Tibial artery (tissue), 4 donors: ENCODE measurements at regions of chr3 and their contacts with region 1.

Region 1: DNA sequence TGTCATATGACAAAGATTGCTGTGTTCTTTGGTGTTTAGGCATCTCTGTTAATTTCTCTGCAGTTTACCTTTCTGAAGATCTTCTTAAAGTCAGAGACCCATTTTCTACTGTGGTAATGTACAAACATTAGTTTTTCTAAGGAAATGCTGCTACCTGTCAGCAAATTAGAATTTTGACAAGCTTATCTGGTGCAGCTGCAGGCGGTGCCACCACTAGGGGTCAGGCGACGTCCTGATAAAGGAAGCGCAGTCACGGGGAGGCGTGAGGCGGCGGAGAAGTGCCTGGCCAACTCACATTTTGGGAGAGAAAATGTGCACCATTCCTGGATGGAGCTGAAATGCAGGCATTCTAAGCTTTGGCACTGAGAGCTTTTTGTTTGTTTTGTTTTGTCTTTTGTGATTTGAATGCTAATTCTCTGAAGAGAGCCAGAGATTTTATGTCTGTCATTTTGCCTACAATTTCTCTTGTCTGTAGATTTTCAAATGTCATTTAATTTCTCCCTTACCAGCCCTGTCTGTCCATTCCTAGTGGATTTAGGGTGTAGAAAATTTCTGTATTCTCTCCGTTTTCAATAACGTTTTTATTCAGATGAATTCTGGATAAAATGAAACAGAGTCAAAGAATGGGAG is 24.9 kb upstream of the SIAH2 start:
- DNase-seq: peak; percentile 85 to 86
- H3K4me3 ChIP-seq: no peak overlapping the region
- H3K27ac ChIP-seq: no peak overlapping the region
- H3K4me1 ChIP-seq: no peaks in the 10 kb centered on the region
- H3K27me3 ChIP-seq: peaks cover 0 to 3% of the 10 kb centered on the region in 2 donors
- CTCF ChIP-seq: peak; percentile 84 to 86

Region 2: GRCh38 chr3:150861851-150862250 is 74.0 kb after region 1 on chr3:
- intact Hi-C with region 1: no loop called
- DNase-seq: no peak
- H3K4me3 ChIP-seq: no peak overlapping the region
- H3K27ac ChIP-seq: no peak overlapping the region
- H3K4me1 ChIP-seq: no peaks in the 10 kb centered on the region
- H3K27me3 ChIP-seq: no peaks in the 10 kb centered on the region
- CTCF ChIP-seq: no peak

Region 3: DNA sequence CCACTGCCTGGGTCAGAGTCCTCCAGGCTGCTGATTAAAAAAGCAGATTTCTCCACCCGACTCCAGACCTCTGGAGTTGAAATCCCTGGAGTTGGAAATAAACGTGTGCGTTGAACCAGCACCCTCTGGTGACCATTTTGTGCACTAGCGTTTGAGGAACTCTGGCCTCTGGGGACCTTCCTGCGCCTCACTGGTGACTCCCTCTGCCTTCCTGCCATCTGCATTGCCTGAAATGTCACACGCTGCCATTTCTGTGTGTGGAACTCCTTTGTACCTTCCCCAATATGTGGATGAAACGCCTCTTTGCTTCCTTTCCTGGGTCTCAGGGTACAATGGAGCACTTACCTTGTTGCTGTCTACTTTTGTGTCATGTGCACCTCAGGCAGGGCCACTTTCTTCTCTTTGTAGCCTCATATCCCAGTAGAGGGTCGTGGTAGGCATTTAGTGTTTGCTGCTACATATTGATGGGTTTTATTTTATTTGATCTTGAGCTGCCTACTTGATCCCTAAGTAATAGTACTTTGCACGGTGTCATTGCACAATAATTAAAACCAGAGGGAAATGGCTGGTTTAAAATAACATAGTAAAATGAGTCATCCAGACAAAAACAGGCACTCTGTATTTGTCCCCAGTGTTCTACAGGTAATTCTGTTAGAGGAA is 358.3 kb after region 1 on chr3:
- intact Hi-C with region 1: loop called (anchors 5 kb)
- DNase-seq: peak; percentile 63 to 81
- H3K4me3 ChIP-seq: no peak overlapping the region
- H3K27ac ChIP-seq: no peak overlapping the region
- H3K4me1 ChIP-seq: peaks cover 0 to 11% (median 10%) of the 10 kb centered on the region in 4 donors
- H3K27me3 ChIP-seq: peaks cover 0 to 5% of the 10 kb centered on the region in 2 donors
- CTCF ChIP-seq: peak; percentile 81 to 89